ENCODE measurements at regions of chr10 and their contacts with region 1.

Region 1: DNA sequence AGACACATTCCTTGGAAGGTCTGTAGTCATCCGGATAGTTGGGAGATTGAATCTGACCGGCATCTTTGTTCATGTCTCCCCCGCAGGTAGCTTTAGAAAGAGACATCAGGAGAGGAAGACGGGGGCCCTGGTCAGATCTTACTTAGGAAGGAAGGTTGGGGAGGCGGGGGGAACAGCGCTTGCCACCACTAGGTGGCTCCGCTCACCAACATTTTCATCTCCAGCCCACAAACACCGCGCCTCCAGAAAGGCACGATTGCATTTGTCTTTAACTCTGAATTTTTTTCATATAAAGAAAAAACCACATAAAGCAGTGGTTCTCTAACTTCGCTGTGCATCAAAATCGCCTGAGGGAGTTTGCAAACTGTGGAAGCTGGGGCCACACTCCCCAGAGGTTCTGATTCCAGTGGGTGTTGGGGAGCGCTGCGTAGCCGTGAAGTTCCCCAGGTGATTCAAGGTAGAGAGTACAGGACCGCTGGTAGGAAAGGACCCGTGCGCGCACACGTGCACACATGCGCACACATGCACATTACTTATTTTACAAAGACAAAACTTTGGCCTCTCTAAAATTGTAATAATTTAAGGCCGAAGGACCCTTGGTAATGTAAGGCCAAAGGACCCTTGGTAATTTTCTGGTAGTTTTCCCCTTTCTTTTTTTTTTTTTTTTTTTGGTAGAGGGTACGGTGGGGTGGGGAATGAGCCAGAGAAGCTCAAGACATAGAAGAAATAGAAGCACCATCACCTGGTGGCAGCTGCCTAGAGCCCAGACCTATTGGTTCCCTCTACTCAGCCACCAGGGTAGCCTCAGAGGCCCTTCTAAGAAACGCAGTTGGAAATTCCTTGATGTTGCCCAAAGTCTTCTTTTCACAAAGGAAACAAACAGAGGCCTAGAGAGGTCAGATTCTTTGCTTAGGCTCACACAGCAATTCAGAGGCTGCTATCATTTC is 37.4 kb upstream of the OPALIN start:
- DNase-seq: peak; percentile 59 to 67
- H3K4me3 ChIP-seq: no peak overlapping the region
- H3K27ac ChIP-seq: no peak overlapping the region
- H3K4me1 ChIP-seq: no peaks in the 10 kb centered on the region
- H3K27me3 ChIP-seq: no peaks in the 10 kb centered on the region
- CTCF ChIP-seq: peak; percentile 72 to 91 (median 78)
- POLR2A ChIP-seq: no peak

Region 2: GRCh38 chr10:96299383-96299782 is 96.8 kb before region 1 on chr10:
- intact Hi-C with region 1: no loop called
- DNase-seq: no peak
- H3K4me3 ChIP-seq: no peak overlapping the region
- H3K27ac ChIP-seq: no peak overlapping the region
- H3K4me1 ChIP-seq: no peaks in the 10 kb centered on the region
- H3K27me3 ChIP-seq: no peaks in the 10 kb centered on the region
- CTCF ChIP-seq: no peak
- POLR2A ChIP-seq: no peak

Region 3: DNA sequence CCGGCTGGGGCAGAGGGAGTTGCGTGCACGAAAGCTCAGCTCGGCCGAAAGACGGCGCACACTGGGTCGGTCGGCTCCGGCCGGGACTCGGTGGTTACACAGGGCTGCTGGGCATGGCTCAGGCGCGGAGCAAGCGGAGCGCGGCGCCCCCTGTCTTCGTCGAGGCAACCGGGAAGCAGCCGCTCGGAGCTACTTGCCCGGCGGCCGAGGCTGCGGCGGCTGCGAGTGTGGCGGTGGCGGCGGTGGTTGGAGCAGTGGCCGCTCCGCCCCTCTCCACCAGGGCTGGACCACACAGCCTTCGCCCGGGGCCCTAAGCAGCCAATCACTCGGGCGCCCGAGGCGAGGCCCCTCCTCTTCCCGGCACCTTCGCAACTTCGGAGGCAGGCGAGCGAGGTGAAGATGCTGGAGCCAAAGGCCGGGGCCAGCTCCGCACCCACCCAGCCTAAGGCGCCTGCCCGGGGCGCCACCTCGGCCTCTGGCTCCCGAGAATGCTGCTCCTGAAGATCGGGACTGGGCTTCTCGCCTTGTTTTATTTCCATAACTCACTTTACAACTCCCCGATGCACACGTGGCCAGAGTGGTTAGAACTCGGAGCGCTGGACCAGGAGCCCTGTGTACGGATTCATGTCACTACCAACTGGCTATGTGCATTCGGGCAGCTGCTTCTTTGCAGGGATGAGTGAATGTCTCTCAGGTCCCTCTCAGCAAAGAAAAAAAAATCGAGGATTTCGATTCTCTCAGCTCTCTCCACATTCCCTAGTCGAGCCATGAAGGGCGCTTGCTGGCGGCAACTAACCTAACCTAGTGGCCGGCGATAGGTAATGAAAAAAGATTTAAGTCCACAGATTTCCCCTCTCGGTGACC is 117.7 kb after region 1 on chr10 and contains the start of gene TLL2:
- intact Hi-C with region 1: loop called (anchors 10 kb)
- DNase-seq: peak; percentile 73 to 83
- H3K4me3 ChIP-seq: peak within 1 kb of the TSS; percentile 31 to 49
- H3K27ac ChIP-seq: no peak within 1 kb of the TSS
- H3K4me1 ChIP-seq: peaks cover 0 to 12% of the 10 kb centered on the region in 2 donors
- H3K27me3 ChIP-seq: no peaks in the 10 kb centered on the region
- CTCF ChIP-seq: peak; percentile 76 to 83 (median 77)
- POLR2A ChIP-seq: peak in 1 of 2 donors; percentile 50
- total RNA-seq, gene TLL2: 0.67 to 1.1 TPM in 2 of 4 donors, not detected in the others

Region 4: DNA sequence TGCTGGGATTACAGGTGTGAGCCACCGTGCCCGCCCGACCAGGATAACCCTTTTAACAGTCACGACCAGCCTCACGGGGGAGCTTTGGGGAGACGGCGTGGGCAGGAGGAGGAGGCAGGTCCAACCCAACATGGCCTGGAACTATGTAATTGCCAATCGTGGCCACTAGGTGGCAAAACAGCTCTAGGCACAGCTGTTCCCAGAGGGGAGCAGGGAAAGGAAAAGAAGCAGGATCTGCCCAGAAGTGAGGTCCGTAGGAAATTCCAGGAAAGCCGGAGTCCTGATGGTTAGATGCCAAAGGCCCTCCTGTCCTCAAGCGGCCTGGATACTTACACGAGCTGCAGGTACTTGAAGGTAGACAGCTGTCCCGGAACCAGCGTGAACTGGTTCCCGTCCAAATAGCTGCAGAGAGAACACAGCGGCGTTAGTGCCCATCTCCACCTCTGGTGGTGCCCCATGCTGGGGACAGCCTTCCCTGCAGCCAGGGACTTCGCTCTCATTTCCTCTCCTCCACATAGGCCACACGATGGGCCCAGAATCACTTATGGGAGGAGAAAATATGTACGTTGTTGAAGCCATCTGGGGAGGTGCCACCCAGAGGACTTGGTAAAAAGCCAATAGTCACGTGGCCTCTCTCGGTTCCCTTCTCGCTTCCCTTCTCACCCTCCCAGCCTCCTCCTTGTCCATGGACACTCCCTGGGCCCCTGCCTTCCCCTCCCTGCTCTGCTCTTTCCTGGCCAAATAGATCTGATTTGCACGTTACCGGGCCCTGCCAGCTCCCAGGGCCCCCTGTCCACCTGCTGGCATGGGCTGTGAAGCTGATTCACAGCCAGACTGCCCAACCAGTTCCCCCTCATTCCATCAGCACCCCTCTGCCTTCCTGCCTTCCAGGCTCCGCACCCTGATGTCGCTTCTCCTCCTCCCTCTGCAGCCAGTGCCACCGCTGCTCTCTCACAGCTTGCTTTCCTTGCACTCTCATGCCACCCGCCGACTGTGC is 641.5 kb after region 1 on chr10:
- intact Hi-C with region 1: loop called (anchors 10 kb)
- DNase-seq: peak; percentile 76 to 77
- H3K4me3 ChIP-seq: peak overlapping the region in 1 of 2 donors; percentile 34
- H3K27ac ChIP-seq: no peak overlapping the region
- H3K4me1 ChIP-seq: no peaks in the 10 kb centered on the region
- H3K27me3 ChIP-seq: no peaks in the 10 kb centered on the region
- CTCF ChIP-seq: peak; percentile 76 to 83 (median 79)
- POLR2A ChIP-seq: no peak